Sigmoid colon (tissue), 7 donors: ENCODE measurements at regions of chr2 and their contacts with region 1.

Region 1: DNA sequence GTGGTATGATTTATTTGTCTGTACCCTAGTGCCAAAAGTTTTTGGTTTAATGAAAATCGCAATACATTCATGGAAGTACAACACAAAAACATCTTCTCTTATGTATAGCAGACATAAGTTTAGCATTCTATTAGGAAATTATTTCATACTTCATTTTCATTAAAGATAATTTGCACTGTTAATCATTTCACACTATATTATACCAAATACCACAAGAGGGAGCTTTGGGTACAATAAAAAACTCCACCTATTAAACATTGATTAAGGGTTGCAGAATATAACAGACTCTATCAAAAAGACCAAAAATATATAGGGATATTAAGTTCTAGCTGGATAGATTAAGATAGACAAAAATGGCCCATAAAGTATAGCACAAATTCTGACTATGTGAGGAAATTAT is 79.0 kb downstream of the SLC66A3 start:
- DNase-seq: no peak
- H3K4me3 ChIP-seq: no peak overlapping the region
- H3K27ac ChIP-seq: no peak overlapping the region
- H3K4me1 ChIP-seq: peaks cover 0 to 16% (median 8%) of the 10 kb centered on the region in 4 donors
- H3K27me3 ChIP-seq: no peaks in the 10 kb centered on the region
- CTCF ChIP-seq: peak; percentile 47 to 60 (median 52)
- EP300 ChIP-seq: no peak
- POLR2A ChIP-seq: no peak

Region 2: DNA sequence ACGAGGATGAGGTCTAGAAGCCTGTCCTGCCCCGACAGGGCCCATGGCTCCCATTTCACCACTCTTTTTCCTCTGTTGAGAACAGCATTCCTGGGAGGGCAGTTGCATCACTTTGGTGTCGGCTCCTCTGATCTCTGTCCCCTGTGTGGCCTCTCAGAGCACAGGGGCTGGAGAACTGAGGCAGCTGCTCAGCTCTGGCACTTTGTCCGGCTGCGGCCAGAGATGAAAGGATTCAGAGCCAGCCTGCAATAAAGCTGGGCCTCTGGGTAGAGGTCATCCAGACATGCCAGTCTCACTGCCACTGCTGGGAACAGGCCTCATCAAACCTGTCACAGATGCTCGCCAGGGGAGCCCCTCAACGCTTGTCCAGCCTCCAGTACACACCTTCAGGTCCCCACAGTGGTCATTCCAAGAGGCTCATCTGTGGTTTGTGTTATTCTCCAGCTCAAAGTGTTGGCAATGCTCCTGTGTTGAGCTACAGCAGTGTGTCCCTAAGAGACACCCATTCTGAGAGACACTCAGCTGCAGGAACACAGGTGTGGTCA is 123.2 kb after region 1 on chr2:
- intact Hi-C with region 1: no loop called
- DNase-seq: no peak
- H3K4me3 ChIP-seq: no peak overlapping the region
- H3K27ac ChIP-seq: peak overlapping the region in 1 of 4 donors; percentile 32
- H3K4me1 ChIP-seq: peaks cover 0 to 10% (median 7%) of the 10 kb centered on the region in 4 donors
- H3K27me3 ChIP-seq: no peaks in the 10 kb centered on the region
- CTCF ChIP-seq: no peak
- EP300 ChIP-seq: no peak
- POLR2A ChIP-seq: no peak

Region 3: GRCh38 chr2:11446733-11447248 is 212.5 kb after region 1 on chr2:
- intact Hi-C with region 1: loop called (anchors 10 kb)
- DNase-seq: peak; percentile 63
- H3K4me3 ChIP-seq: no peak overlapping the region
- H3K27ac ChIP-seq: peak overlapping the region in 1 of 4 donors; percentile 3
- H3K4me1 ChIP-seq: no peaks in the 10 kb centered on the region
- H3K27me3 ChIP-seq: no peaks in the 10 kb centered on the region
- CTCF ChIP-seq: peak; percentile 42 to 73 (median 68)
- EP300 ChIP-seq: no peak
- POLR2A ChIP-seq: no peak